ENCODE measurements at regions of chr19 and their contacts with region 1.

Region 1: DNA sequence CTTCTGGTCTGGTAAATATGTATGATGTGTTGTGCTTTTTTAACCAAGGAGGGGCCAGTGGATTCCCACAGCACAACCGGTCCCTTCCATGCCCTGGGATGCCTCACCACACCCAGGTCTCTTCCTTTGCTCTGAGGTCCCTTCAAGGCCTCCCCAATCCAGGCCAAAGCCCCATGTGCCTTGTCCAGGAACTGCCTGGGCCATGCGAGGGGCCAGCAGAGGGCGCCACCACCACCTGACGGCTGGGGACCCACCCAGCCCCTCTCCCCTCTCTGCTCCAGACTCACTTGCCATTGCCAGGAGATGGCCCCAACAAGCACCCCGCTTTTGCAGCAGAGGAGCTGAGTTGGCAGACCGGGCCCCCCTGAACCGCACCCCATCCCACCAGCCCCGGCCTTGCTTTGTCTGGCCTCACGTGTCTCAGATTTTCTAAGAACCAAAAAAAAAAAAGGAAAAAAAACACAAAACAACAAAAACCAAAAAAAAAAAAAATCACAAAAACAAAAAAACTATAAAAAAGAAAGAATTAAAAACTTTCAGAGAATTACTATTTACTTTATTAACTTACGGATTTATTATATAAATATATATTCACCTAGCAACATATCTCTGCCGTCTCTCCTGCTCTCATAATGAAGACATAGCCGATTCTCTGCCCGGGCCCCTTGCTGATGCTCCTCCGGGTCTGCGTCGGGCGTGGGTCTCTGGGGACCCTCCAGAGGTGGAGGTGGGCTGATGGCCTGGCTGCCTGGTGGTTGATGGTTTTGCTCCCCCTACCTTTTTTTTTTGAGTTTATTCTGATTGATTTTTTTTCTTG is 14.4 kb downstream of the CAPN12 start:
- DNase-seq: peak; percentile 79
- ATAC-seq: peak; percentile 77
- H3K4me3 Mint-ChIP-seq: no peak overlapping the region
- H3K27ac Mint-ChIP-seq: peak overlapping the region; percentile 46
- H3K4me1 Mint-ChIP-seq: peaks cover 25% of the 10 kb centered on the region
- H3K27me3 Mint-ChIP-seq: no peaks in the 10 kb centered on the region
- CTCF ChIP-seq: peak; percentile 54

Region 2: DNA sequence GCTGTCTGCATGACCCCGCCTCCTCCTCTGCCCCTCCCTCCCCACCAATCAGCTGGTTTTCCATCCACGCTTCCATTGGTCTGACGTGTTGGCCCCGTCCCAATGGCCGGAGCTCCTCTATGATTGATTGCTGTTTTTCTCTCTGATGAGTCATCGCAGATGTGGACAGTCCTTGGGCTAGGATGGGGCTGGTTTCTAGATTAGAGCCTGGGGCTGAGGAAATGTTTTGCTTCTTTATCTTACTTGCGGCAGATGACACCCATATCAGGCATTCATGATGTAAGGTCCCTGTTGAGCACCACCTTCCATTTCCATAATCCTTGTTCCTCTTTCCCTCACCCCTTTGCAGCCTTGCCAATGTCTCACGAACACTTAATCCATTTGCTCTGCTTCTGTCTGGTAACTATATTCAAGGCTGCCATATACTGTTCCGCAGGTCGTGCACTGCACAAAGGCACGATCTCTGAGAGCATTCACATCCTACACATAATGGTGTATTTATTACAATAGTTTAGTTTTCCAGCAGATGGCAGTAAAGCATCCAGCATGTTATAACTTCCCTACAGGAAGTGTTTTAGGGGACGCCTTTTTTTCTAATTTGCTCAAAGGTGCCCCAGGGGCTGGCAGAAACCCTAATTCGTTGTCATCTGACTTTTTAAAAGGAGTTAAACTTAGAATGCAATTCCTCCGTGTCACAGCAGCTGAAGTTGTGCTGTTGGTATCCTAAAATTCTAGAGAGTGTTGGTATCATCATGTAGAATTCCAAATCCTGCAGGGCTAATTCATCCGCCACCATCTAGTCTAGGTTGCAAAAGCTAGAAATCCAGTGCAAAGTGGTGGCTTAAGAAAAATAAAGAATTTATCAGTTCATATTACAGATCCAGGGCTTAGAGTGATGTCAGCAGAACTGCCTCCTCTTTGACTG is 185.6 kb before region 1 on chr19:
- CTCF ChIA-PET with region 1: no interaction called
- POLR2A ChIA-PET with region 1: no interaction called
- intact Hi-C with region 1: loop called (anchors 10 kb)
- DNase-seq: no peak
- ATAC-seq: peak; percentile 65
- H3K4me3 Mint-ChIP-seq: peak overlapping the region; percentile 11
- H3K27ac Mint-ChIP-seq: peak overlapping the region; percentile 30
- H3K4me1 Mint-ChIP-seq: peaks cover 33% of the 10 kb centered on the region
- H3K27me3 Mint-ChIP-seq: no peaks in the 10 kb centered on the region
- CTCF ChIP-seq: peak; percentile 41

Region 3: DNA sequence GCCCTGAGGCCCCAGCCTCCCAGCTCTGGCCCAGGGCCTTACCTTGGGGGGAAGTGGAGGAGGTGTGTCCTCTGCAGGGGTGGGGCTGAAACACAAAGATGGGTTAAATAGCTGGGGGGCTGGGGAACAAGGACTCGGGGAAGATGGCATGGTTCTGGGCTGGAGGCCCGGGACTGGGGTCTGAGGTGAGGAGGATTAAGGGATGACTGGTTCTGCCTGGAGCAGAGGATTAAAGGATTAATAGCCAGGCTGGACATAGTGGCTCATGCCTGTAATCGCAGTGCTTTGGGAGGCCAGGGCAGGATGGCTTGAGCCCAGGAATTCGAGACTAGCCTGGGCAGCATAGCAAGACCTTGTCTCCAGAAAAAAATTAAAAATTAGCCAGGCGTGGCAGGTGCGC is 123.7 kb before region 1 on chr19:
- CTCF ChIA-PET with region 1: no interaction called
- POLR2A ChIA-PET with region 1: no interaction called
- intact Hi-C with region 1: no loop called
- DNase-seq: no peak
- ATAC-seq: no peak
- H3K4me3 Mint-ChIP-seq: no peak overlapping the region
- H3K27ac Mint-ChIP-seq: no peak overlapping the region
- H3K4me1 Mint-ChIP-seq: peaks cover under 1% of the 10 kb centered on the region
- H3K27me3 Mint-ChIP-seq: no peaks in the 10 kb centered on the region
- CTCF ChIP-seq: no peak

Region 4: DNA sequence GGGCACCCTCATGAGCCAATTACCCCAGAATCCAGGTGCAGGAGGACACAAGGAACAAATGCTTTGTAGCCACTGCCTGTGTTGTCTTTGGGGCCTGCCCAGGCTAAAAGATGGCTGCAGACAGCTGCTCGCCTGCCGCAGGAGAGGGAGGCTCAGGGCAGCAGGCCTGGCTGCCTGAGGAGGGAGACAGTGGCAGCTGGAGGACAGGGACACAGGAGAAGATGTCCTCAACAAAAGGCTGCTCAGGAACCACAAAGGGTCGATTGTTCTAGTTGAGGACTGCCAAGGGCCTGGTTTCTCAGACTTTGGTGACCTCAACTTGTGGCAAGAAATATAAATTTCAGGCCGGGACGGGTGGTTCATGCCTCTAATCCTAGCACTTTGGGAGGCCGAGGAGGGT is 161.9 kb after region 1 on chr19:
- CTCF ChIA-PET with region 1: interaction called, 7 read pairs
- POLR2A ChIA-PET with region 1: interaction called, 9 read pairs
- intact Hi-C with region 1: loop called (anchors 1 kb)
- DNase-seq: no peak
- ATAC-seq: no peak
- H3K4me3 Mint-ChIP-seq: no peak overlapping the region
- H3K27ac Mint-ChIP-seq: no peak overlapping the region
- H3K4me1 Mint-ChIP-seq: peaks cover 1% of the 10 kb centered on the region
- H3K27me3 Mint-ChIP-seq: no peaks in the 10 kb centered on the region
- CTCF ChIP-seq: no peak

Measured in activated B cell treated with CpG ODN at 0.5 μM for 24 hours (primary cell).